H1 (cell line): ENCODE measurements at regions of chr14 and their contacts with region 1.

Region 1: DNA sequence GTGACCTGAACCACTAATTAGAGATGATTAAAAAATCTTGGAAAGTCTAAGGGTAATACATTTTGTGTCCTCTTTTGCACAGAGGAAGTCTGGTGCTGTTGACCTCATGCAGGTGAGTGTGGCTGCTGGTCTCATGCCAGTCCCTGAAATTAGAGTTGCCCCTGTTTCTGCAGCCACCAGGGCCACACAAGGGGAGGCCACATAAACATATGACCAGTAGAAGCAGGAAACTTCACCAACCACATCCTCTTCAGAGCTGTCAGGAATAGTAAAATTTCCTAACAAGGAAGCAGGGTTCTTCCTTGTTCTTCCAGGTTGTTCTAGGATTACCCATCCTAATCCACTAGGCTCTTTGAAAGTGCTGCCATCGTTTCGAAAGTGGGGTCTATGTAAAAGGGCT is 28.3 kb downstream of the PSMA6 start:
- DNase-seq: no peak
- H3K4me3 ChIP-seq: no peak overlapping the region
- H3K27ac ChIP-seq: no peak overlapping the region
- H3K4me1 ChIP-seq: no peaks in the 10 kb centered on the region
- H3K27me3 ChIP-seq: no peaks in the 10 kb centered on the region
- CTCF ChIP-seq: no peak
- EP300 ChIP-seq: no peak
- POLR2A ChIP-seq: no peak
- RAD21 ChIP-seq: no peak

Region 2: GRCh38 chr14:35088514-35088913 is 232.0 kb before region 1 on chr14:
- CTCF ChIA-PET with region 1: no interaction called
- POLR2A ChIA-PET with region 1: no interaction called
- DNase-seq: no peak
- H3K4me3 ChIP-seq: no peak overlapping the region
- H3K27ac ChIP-seq: no peak overlapping the region
- H3K4me1 ChIP-seq: no peaks in the 10 kb centered on the region
- H3K27me3 ChIP-seq: no peaks in the 10 kb centered on the region
- CTCF ChIP-seq: no peak
- EP300 ChIP-seq: no peak
- POLR2A ChIP-seq: no peak
- RAD21 ChIP-seq: no peak

Region 3: DNA sequence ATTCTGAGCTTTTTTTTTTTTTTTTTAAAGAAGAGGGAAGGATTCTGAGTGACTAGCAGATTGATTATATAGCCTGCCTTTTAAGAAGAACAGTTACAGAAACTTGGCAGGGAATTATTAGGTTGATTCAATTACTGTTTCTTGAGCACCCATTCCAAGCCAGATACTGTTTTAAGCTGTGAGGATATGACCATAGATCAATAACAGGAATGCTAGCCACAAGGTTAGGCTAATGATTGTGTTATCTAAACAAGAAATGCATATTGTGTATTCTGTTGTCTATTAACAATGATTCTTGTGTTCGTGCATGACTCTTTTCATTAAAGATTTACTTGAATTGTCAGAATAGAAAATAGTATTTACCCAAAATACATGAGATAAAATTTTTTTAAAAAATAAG is 131.1 kb before region 1 on chr14:
- CTCF ChIA-PET with region 1: no interaction called
- POLR2A ChIA-PET with region 1: no interaction called
- DNase-seq: no peak
- H3K4me3 ChIP-seq: no peak overlapping the region
- H3K27ac ChIP-seq: no peak overlapping the region
- H3K4me1 ChIP-seq: no peaks in the 10 kb centered on the region
- H3K27me3 ChIP-seq: no peaks in the 10 kb centered on the region
- CTCF ChIP-seq: no peak
- EP300 ChIP-seq: no peak
- POLR2A ChIP-seq: no peak
- RAD21 ChIP-seq: no peak

Region 4: DNA sequence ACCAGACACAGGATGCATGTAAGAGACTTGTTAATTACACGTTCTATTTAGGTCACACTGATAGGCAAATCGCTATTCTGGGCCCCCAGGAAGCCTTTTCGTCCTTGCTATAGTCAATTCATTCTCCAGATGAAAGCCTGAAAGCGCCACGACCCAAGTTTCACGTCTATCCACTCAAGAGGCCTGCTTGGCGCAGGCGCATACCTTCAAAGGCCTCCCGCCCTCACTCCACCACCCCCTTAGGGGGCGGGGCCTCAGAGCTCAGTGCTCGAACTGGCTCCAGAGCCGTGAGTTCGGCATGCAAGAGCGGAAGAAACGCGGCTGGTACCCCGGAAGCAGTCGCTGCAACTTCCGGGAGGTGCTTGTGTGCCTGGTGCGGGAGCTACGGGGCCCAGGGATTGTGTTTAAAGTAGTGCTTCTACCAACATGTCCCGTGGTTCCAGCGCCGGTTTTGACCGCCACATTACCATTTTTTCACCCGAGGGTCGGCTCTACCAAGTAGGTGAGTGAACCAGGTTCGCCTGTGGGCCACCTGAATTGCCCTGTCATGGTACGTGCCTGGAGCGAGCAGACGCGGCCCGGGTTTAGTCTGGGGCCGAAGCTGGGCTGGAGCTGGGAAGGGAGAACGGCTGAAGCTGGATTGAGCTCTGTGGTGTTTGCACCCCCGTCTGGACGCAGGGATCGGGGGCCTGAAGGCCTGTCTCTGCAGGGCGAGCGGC is 28.3 kb before region 1 on chr14 and contains the start of gene PSMA6:
- CTCF ChIA-PET with region 1: interaction called, 3 read pairs
- POLR2A ChIA-PET with region 1: interaction called, 10 read pairs
- DNase-seq: peak; percentile 97
- H3K4me3 ChIP-seq: peak within 1 kb of the TSS; percentile 62 to 98 (median 94)
- H3K27ac ChIP-seq: peak within 1 kb of the TSS; percentile 86
- H3K4me1 ChIP-seq: no peaks in the 10 kb centered on the region
- H3K27me3 ChIP-seq: no peaks in the 10 kb centered on the region
- CTCF ChIP-seq: no peak
- EP300 ChIP-seq: no peak
- POLR2A ChIP-seq: peak; percentile 53 to 84
- RAD21 ChIP-seq: peak in 1 of 2 experiments; percentile 4; a peak in 2 of 4 replicates
- total RNA-seq, gene PSMA6: 213 and 238 TPM in 2 replicates